PC-9 (cell line): ENCODE measurements at regions of chr1 and their contacts with region 1.

Region 1: GRCh38 chr1:77533660-77534305 is 148.7 kb downstream of the ZZZ3 start:
- DNase-seq: peak; percentile 35 to 50
- H3K4me3 ChIP-seq: no peak overlapping the region
- H3K27ac ChIP-seq: no peak overlapping the region
- H3K4me1 ChIP-seq: peaks cover 33% of the 10 kb centered on the region
- H3K27me3 ChIP-seq: no peaks in the 10 kb centered on the region
- CTCF ChIP-seq: peak; percentile 96

Region 2: GRCh38 chr1:77281491-77282186 is 252.1 kb before region 1 on chr1 and contains the start of gene AK5:
- CTCF ChIA-PET with region 1: no interaction called
- POLR2A ChIA-PET with region 1: no interaction called
- intact Hi-C with region 1: loop called (anchors 5 kb)
- DNase-seq: peak in 1 of 2 experiments; percentile 41
- H3K4me3 ChIP-seq: peak within 1 kb of the TSS; percentile 67
- H3K27ac ChIP-seq: no peak within 1 kb of the TSS
- H3K4me1 ChIP-seq: no peaks in the 10 kb centered on the region; the same call in 1 of the 2 replicates
- H3K27me3 ChIP-seq: peaks cover 24% of the 10 kb centered on the region
- CTCF ChIP-seq: no peak
- total RNA-seq, gene AK5: 0.28 and 1.2 TPM in 2 replicates

Region 3: DNA sequence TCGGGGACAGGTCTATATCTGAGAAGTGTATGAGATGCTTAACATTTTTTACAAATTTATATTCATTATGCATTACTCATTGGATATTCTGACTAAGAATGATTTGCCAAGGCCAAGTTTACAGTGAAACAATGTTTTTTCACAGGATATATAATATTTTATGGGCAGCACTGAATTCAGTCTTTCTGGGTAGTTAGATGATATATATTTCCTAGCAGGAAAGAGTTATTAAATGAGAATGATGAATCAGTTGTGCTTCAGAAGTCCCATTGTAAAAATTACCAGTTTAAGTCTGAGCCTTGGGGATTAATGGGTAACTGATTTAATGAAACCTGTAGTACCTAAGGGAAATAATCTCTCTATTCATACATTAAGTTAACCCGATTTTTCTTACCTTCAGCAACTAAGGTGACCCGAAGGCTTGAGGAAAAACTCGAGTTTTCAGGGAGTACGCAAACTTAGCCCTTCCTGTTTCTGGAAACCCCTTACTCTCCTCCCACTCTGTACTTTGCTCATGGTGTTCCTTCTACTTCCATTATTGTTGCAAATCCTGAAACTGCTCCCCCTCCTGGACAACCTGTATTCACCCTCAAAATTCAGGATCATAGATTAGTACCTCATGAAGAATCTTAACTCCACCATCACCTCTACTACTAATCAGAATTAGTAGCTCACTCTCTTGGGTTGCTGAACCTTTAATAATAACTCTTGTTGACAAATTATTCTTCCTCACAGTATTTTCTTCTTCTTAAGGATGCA is 116.9 kb before region 1 on chr1:
- CTCF ChIA-PET with region 1: no interaction called
- POLR2A ChIA-PET with region 1: no interaction called
- intact Hi-C with region 1: loop called (anchors 10 kb)
- DNase-seq: no peak
- H3K4me3 ChIP-seq: no peak overlapping the region
- H3K27ac ChIP-seq: no peak overlapping the region
- H3K4me1 ChIP-seq: peaks cover 39% of the 10 kb centered on the region
- H3K27me3 ChIP-seq: no peaks in the 10 kb centered on the region
- CTCF ChIP-seq: peak; percentile 64

Region 4: DNA sequence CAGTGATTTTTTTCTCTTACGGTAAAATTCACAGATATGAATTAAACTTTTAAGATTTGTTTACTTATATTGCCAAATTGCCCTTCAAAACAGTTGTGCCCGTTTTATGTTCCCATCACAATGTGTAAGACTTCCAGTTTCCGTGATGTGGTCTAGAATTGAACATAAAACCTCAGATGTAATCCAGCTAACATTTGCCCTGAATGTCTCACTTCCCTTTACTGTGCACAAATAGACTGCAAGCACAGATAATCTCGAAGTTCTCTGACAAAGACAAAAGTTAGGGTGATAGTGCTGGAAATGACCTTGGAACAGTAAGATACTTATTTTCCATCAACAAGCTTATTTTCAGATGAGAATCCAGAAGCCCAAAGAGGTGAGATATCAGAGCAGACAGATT is 28.8 kb before region 1 on chr1:
- CTCF ChIA-PET with region 1: no interaction called
- POLR2A ChIA-PET with region 1: no interaction called
- intact Hi-C with region 1: no loop called
- DNase-seq: no peak
- H3K4me3 ChIP-seq: no peak overlapping the region
- H3K27ac ChIP-seq: no peak overlapping the region
- H3K4me1 ChIP-seq: no peaks in the 10 kb centered on the region
- H3K27me3 ChIP-seq: no peaks in the 10 kb centered on the region
- CTCF ChIP-seq: no peak

Region 5: GRCh38 chr1:77683160-77684148 is 149.7 kb after region 1 on chr1:
- CTCF ChIA-PET with region 1: no interaction called
- POLR2A ChIA-PET with region 1: no interaction called
- intact Hi-C with region 1: loop called (anchors 10 kb)
- DNase-seq: peak; percentile 89 to 93
- H3K4me3 ChIP-seq: peak overlapping the region; percentile 92
- H3K27ac ChIP-seq: peak overlapping the region; percentile 96
- H3K4me1 ChIP-seq: peaks cover 31% of the 10 kb centered on the region
- H3K27me3 ChIP-seq: no peaks in the 10 kb centered on the region
- CTCF ChIP-seq: peak; percentile 84

Region 6: DNA sequence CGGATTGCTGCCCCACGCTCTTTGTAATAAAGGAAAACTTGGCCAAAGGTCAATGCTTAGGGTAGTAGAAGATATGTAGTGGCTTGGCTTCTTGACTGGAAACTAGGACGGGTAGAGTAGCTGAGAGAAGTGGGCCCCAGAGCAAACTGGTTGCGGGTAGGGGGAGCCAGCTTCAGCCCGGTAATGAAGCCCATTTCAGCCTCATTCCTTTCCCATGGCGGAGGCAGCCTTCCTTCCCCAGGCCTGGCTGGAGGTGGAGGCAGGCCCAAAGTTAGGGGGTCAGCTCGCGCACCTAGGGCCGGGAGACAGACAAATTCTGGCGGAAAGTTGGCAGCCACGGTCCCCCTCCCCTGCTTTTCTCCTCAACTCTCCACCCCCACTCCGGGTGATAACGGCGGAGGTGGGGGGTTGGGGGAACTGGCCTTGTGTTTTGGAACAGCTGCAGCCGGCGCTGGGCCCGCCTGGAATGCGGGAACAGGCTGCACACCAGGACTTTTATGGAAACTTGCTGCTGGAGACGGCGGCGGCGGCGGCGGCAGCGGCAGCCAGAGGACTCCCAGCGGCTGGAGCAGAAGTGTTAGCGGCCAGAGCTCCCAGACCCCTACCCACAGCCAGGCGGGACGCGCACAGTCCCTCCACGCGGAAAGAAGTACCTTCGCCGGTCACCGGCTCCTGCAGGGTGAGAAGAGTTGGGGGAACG is 354.4 kb after region 1 on chr1 and contains the start of gene NEXN:
- CTCF ChIA-PET with region 1: interaction called, 11 read pairs
- POLR2A ChIA-PET with region 1: no interaction called
- intact Hi-C with region 1: no loop called
- DNase-seq: peak; percentile 39 to 41
- H3K4me3 ChIP-seq: peak within 1 kb of the TSS; percentile 82
- H3K27ac ChIP-seq: peak within 1 kb of the TSS; percentile 60
- H3K4me1 ChIP-seq: peaks cover 20% of the 10 kb centered on the region
- H3K27me3 ChIP-seq: no peaks in the 10 kb centered on the region
- CTCF ChIP-seq: no peak
- total RNA-seq, gene NEXN: 0.92 and 1.2 TPM in 2 replicates

Region 7: GRCh38 chr1:77900687-77901293 is 367.0 kb after region 1 on chr1:
- CTCF ChIA-PET with region 1: no interaction called
- POLR2A ChIA-PET with region 1: no interaction called
- intact Hi-C with region 1: loop called (anchors 10 kb)
- DNase-seq: peak; percentile 19 to 60
- H3K4me3 ChIP-seq: no peak overlapping the region
- H3K27ac ChIP-seq: no peak overlapping the region
- H3K4me1 ChIP-seq: no peaks in the 10 kb centered on the region; the same call in 1 of the 2 replicates
- H3K27me3 ChIP-seq: no peaks in the 10 kb centered on the region
- CTCF ChIP-seq: peak; percentile 89

Region 8: DNA sequence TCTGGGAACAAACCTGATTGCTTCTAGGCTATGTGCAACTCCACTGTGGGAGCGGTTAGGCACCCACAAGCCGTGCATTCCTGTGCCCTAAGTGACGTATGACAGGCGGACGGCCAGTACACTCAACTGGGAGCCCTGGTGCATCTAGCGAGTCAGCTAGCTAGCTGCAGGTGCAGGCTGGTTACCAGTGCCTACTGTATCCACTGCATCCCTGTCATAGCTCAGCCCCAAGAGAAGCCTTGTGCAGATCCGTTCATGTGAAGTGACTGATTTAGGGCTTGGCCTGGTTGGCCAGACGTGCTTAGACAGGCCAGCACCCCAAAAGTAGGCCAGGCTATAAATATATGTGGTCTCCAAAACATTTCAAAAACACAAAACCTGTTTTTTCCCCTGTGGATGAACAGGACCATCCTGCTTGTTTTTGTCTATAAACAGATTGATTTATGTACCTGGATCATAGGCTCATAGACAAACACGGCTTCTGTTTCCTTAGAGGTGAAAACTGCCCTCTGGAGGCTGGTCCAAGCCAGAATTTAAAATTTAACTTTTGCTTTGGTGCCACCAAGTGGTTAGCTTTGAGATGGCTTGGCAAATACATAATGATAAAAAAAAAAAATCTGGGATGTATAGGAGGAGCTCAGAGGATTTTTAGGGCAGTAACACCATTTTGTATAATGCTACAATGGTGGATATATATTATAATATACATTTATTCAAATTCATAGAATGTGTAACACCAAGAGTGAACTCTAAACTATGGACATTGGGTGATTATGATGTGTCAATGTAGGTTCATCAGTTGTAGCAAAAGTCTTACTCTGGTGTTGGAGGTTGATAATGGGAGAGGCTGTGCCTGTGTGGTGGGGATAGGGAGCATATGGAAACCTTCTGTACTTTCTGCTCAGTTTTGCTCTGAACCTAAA is 580.5 kb after region 1 on chr1:
- CTCF ChIA-PET with region 1: no interaction called
- POLR2A ChIA-PET with region 1: no interaction called
- intact Hi-C with region 1: loop called (anchors 5 kb)
- DNase-seq: peak; percentile 64 to 72
- H3K4me3 ChIP-seq: no peak overlapping the region
- H3K27ac ChIP-seq: no peak overlapping the region
- H3K4me1 ChIP-seq: no peaks in the 10 kb centered on the region
- H3K27me3 ChIP-seq: no peaks in the 10 kb centered on the region
- CTCF ChIP-seq: peak; percentile 92